ENCODE measurements at regions of chr7 and their contacts with region 1.

Region 1: DNA sequence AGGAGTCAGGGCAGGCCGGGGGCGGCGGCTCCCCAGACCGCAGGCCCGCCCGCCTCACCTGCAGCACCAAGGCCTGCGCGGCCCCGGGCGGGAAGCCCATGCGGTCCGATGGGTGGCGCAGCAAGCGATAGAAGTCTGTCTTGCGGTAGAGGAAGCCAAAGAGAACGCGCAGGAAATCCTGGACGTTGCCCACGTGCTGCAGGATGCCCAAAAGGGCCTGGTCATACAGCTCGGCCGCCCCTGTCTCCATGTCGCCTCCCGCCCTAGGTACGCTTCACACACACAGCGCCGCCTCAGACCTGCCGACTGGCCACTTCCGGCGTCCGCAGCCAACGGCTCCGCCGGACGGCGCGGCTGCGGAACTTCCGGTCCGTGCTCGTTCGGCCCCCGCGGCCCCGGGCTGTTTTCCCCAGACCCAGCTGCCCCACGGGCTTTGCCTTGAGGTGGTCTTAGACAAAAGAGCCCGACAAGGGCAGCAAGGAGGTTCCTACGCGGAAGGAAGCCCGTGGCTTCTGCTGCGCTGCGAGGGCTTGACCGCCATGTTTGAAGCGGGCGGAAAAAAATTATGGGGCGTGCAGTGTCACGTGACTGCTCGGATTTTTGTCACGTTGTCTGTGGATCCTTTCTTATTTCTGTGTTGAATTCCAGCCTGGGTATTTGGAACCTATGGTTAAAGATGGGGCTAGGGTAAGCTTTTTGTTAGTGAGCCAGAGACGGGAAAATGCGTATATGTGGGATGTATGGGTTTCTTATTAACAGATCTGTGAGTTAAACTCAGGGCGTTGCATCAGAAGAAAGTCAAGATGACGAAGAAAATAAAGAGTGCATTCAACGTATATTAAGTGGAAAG is at the start of gene NUDCD3:
- DNase-seq: peak; percentile 71 to 91 (median 78)
- ATAC-seq: peak; percentile 71
- H3K4me3 ChIP-seq: peak within 1 kb of the TSS; percentile 84
- H3K4me3 Mint-ChIP-seq: peak within 1 kb of the TSS; percentile 84
- H3K27ac ChIP-seq: peak within 1 kb of the TSS; percentile 95 to 97
- H3K27ac Mint-ChIP-seq: peak within 1 kb of the TSS; percentile 91
- H3K4me1 ChIP-seq: peaks cover 32% of the 10 kb centered on the region
- H3K4me1 Mint-ChIP-seq: peaks cover 48% of the 10 kb centered on the region
- H3K27me3 ChIP-seq: no peaks in the 10 kb centered on the region
- H3K27me3 Mint-ChIP-seq: peaks cover 3% of the 10 kb centered on the region
- CTCF ChIP-seq: peak; percentile 28
- total RNA-seq, gene NUDCD3: 56.6 to 60.6 TPM

Region 2: DNA sequence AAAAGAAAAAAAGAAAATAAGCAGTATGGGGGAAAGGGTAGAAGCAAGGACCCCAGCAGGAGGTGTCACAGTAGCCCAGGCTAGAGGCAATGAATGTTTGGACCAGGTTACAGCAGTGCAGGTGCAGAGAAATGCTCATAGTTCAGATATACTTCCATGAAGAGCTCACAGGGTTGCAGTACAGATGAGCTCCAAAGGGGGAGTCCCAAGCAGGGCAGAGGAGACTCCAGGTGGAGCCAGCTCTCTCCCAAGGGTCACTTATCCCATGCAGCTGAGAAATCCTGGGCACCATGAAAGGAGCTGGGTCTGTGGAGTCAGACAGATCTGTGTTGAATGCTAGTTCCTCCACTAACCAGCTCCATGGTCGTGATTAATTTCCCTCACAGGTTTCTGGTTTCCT is 1753.6 kb before region 1 on chr7:
- CTCF ChIA-PET with region 1: no interaction called
- POLR2A ChIA-PET with region 1: no interaction called
- intact Hi-C with region 1: no loop called
- DNase-seq: no peak
- ATAC-seq: no peak
- H3K4me3 ChIP-seq: no peak overlapping the region
- H3K4me3 Mint-ChIP-seq: no peak overlapping the region
- H3K27ac ChIP-seq: no peak overlapping the region
- H3K27ac Mint-ChIP-seq: no peak overlapping the region
- H3K4me1 ChIP-seq: no peaks in the 10 kb centered on the region
- H3K4me1 Mint-ChIP-seq: no peaks in the 10 kb centered on the region
- H3K27me3 ChIP-seq: no peaks in the 10 kb centered on the region
- H3K27me3 Mint-ChIP-seq: no peaks in the 10 kb centered on the region
- CTCF ChIP-seq: no peak

Region 3: GRCh38 chr7:43784030-43785001 is 706.3 kb before region 1 on chr7:
- CTCF ChIA-PET with region 1: no interaction called
- POLR2A ChIA-PET with region 1: no interaction called
- intact Hi-C with region 1: no loop called
- DNase-seq: peak in 2 of 14 experiments; percentile 19 to 29
- ATAC-seq: no peak
- H3K4me3 ChIP-seq: no peak overlapping the region
- H3K4me3 Mint-ChIP-seq: no peak overlapping the region
- H3K27ac ChIP-seq: no peak overlapping the region
- H3K27ac Mint-ChIP-seq: no peak overlapping the region
- H3K4me1 ChIP-seq: peaks cover 4% of the 10 kb centered on the region
- H3K4me1 Mint-ChIP-seq: peaks cover 4% of the 10 kb centered on the region
- H3K27me3 ChIP-seq: no peaks in the 10 kb centered on the region
- H3K27me3 Mint-ChIP-seq: no peaks in the 10 kb centered on the region
- CTCF ChIP-seq: no peak

Region 4: DNA sequence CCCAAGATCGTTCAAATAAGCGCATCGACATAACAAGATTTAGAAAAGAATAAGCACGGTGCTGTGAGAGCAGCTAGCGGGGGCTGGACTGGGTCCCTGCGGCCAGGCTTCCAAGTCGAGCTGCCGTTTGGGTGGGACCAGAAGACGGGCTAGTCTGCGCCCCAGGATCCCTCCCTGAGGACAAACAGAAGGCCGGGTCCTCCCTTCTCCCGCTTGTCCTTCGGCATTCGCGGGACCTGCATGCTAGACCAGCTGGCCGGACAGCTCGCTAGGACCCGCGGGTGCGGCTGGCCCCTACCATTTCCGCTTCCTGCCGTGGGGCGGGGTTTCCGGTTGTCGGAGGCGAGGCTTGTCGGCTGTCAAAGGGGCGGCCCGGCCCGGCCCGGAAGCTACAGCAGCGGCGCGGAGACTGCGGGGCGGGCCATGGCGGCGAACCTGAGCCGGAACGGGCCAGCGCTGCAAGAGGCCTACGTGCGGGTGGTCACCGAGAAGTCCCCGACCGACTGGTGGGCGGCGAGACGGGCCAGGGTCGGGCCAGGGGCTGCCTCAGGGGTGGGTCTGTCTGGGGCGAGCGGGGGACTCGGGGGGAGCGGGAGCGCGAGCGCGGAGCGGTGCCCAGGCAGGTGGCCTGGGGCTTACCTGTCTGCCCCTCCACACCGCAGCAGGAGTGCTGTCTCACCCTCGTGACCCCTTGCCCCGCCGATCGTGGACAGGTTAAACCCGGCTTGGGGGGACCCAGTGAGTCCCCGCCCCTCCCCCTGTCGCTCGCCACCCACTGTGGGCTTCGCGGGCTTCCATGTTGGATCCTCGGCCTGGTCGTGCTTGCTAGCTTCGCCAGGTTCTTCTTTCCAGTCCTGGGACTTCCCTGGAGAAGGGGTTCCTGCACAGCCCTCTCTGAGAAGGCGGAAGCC is 446.0 kb before region 1 on chr7 and contains the start of gene DBNL:
- CTCF ChIA-PET with region 1: no interaction called
- POLR2A ChIA-PET with region 1: interaction called, 9 read pairs
- intact Hi-C with region 1: loop called in 1 of 2 experiments (anchors 2 kb)
- DNase-seq: peak; percentile 75 to 92 (median 88)
- ATAC-seq: peak; percentile 54
- H3K4me3 ChIP-seq: peak within 1 kb of the TSS; percentile 99
- H3K4me3 Mint-ChIP-seq: peak within 1 kb of the TSS; percentile 87
- H3K27ac ChIP-seq: peak within 1 kb of the TSS; percentile 89
- H3K27ac Mint-ChIP-seq: peak within 1 kb of the TSS; percentile 91
- H3K4me1 ChIP-seq: peaks cover 62% of the 10 kb centered on the region
- H3K4me1 Mint-ChIP-seq: peaks cover 50% of the 10 kb centered on the region
- H3K27me3 ChIP-seq: no peaks in the 10 kb centered on the region
- H3K27me3 Mint-ChIP-seq: no peaks in the 10 kb centered on the region
- CTCF ChIP-seq: no peak
- total RNA-seq, gene DBNL: 88.5 to 90.6 TPM

Region 5: GRCh38 chr7:44200647-44201461 is 289.7 kb before region 1 on chr7 and contains the start of gene YKT6:
- CTCF ChIA-PET with region 1: interaction called, 5 read pairs
- POLR2A ChIA-PET with region 1: interaction called, 12 read pairs
- intact Hi-C with region 1: loop called in 1 of 2 experiments (anchors 1 kb)
- DNase-seq: peak; percentile 89 to 97 (median 92)
- ATAC-seq: peak; percentile 98
- H3K4me3 ChIP-seq: peak within 1 kb of the TSS; percentile 89
- H3K4me3 Mint-ChIP-seq: peak within 1 kb of the TSS; percentile 83
- H3K27ac ChIP-seq: peak within 1 kb of the TSS in 1 of 2 donors; percentile 56
- H3K27ac Mint-ChIP-seq: peak within 1 kb of the TSS; percentile 62
- H3K4me1 ChIP-seq: peaks cover 15% of the 10 kb centered on the region
- H3K4me1 Mint-ChIP-seq: peaks cover 40% of the 10 kb centered on the region
- H3K27me3 ChIP-seq: peaks cover 0 to 7% of the 10 kb centered on the region in 2 experiments
- H3K27me3 Mint-ChIP-seq: peaks cover 13% of the 10 kb centered on the region
- CTCF ChIP-seq: peak; percentile 65
- total RNA-seq, gene YKT6: 85.0 to 86.4 TPM

Region 6: DNA sequence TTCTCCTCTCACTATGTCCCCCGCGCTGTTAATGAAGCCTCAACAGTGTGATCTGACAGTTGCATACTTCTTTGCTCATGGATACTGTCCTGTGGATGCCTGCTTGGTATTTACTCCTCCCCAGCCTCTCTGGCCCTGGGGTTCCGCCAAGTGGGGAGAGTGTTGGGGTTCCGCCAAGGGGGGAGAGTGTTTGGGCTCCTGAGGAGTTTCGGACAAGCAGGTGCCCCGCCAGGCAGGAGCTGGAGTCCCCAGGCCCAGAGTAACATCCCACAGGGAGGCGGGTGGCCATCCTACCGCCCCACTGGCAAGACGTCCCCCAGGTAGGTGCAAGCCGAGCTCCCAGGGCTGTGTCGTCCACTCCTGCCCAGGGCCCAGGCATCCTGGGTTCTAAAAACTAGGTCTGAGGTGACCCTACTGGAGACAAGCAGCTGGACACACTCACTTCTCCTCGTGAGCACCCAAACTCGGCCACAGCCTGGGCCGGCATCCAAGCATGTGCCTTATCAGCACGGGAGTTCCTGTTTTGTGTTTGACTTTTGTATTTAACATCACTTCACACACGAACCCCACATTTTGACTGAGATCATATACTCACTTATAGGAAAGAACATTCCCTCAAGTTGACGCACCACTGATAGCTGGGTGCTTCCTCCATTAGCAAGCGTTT is 199.4 kb before region 1 on chr7:
- CTCF ChIA-PET with region 1: no interaction called
- POLR2A ChIA-PET with region 1: no interaction called
- intact Hi-C with region 1: no loop called
- DNase-seq: peak in 3 of 14 experiments; percentile 1 to 24 (median 2)
- ATAC-seq: no peak
- H3K4me3 ChIP-seq: no peak overlapping the region
- H3K4me3 Mint-ChIP-seq: no peak overlapping the region
- H3K27ac ChIP-seq: no peak overlapping the region
- H3K27ac Mint-ChIP-seq: no peak overlapping the region
- H3K4me1 ChIP-seq: no peaks in the 10 kb centered on the region
- H3K4me1 Mint-ChIP-seq: no peaks in the 10 kb centered on the region
- H3K27me3 ChIP-seq: peaks cover 15 to 25% of the 10 kb centered on the region in 2 experiments
- H3K27me3 Mint-ChIP-seq: peaks cover 52% of the 10 kb centered on the region
- CTCF ChIP-seq: no peak

Region 7: DNA sequence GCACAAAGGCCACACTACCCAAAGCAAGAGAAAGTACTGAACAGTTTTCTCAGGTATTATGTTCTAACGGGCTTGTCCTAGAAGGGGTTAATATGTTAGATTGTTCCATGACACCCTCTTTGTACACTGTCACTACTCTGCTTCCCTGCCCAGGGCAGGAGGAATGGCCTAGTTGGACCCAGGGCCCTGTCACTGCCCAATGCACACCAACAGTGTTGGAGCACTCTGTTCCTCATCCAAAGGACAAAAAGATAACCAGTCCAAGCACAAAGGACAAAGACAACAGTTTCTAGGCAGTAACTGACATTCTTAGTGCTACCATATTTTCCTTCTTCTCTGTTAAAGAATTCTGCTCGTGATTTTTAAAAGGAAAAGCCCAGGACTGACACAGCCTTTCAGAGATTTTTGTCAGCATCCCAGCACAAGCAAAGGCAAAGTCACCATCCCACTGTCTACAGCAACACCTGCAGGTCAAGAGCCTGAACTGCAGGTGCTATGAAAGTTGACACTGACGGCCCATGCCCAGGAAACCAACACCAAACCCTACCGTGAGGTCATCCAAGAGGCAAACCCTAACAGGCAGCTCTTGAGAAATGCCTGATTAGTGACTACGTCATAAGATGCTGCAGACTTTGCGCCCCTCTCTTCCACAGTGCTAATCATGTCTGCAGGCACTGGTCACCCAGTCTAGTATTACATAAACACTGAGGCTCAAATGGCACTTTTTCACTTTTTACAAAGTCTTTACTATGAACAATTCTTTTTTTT is 13.3 kb before region 1 on chr7:
- CTCF ChIA-PET with region 1: interaction called, 4 read pairs
- POLR2A ChIA-PET with region 1: interaction called, 15 read pairs
- intact Hi-C with region 1: no loop called
- DNase-seq: peak; percentile 33 to 83 (median 50)
- ATAC-seq: peak; percentile 98
- H3K4me3 ChIP-seq: no peak overlapping the region
- H3K4me3 Mint-ChIP-seq: no peak overlapping the region
- H3K27ac ChIP-seq: no peak overlapping the region
- H3K27ac Mint-ChIP-seq: peak overlapping the region; percentile 35
- H3K4me1 ChIP-seq: peaks cover 8% of the 10 kb centered on the region
- H3K4me1 Mint-ChIP-seq: peaks cover 74% of the 10 kb centered on the region
- H3K27me3 ChIP-seq: no peaks in the 10 kb centered on the region
- H3K27me3 Mint-ChIP-seq: no peaks in the 10 kb centered on the region
- CTCF ChIP-seq: peak; percentile 92

Region 8: GRCh38 chr7:44581879-44582603 is 91.5 kb after region 1 on chr7 and contains the start of gene TMED4:
- CTCF ChIA-PET with region 1: no interaction called
- POLR2A ChIA-PET with region 1: interaction called, 31 read pairs
- intact Hi-C with region 1: no loop called
- DNase-seq: peak; percentile 100
- ATAC-seq: peak; percentile 86
- H3K4me3 ChIP-seq: peak within 1 kb of the TSS; percentile 87
- H3K4me3 Mint-ChIP-seq: peak within 1 kb of the TSS; percentile 95
- H3K27ac ChIP-seq: peak within 1 kb of the TSS; percentile 96
- H3K27ac Mint-ChIP-seq: peak within 1 kb of the TSS; percentile 97
- H3K4me1 ChIP-seq: peaks cover 32% of the 10 kb centered on the region
- H3K4me1 Mint-ChIP-seq: peaks cover 39% of the 10 kb centered on the region
- H3K27me3 ChIP-seq: no peaks in the 10 kb centered on the region
- H3K27me3 Mint-ChIP-seq: no peaks in the 10 kb centered on the region
- CTCF ChIP-seq: no peak
- total RNA-seq, gene TMED4: 134 to 138 TPM

Region 9: DNA sequence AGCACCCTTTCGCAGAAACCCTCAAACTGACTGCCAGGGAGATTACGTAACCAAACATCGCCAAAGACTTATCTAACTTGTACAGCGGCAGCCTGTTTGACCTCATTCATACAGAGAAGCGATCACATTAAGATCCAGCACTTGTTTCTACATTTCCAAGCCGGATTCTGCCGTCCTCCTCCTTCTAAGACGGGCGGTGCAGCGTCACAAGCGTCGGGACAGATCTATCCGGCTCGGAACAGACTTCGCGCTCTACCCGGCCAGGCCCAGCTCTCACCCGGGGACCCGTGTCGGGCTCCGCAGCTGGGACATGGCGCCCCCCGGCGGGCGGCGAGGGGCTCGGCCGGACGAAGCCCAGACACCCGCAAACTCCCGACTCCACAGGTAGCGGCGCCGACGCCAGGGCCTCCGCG is 356.9 kb after region 1 on chr7:
- CTCF ChIA-PET with region 1: no interaction called
- POLR2A ChIA-PET with region 1: interaction called, 33 read pairs
- intact Hi-C with region 1: loop called in 1 of 2 experiments (anchors 10 kb)
- DNase-seq: peak; percentile 75 to 94 (median 84)
- ATAC-seq: peak; percentile 54
- H3K4me3 ChIP-seq: peak overlapping the region; percentile 71
- H3K4me3 Mint-ChIP-seq: peak overlapping the region; percentile 87
- H3K27ac ChIP-seq: peak overlapping the region; percentile 91 to 99
- H3K27ac Mint-ChIP-seq: peak overlapping the region; percentile 95
- H3K4me1 ChIP-seq: peaks cover 17% of the 10 kb centered on the region
- H3K4me1 Mint-ChIP-seq: peaks cover 43% of the 10 kb centered on the region
- H3K27me3 ChIP-seq: no peaks in the 10 kb centered on the region
- H3K27me3 Mint-ChIP-seq: peaks cover 4% of the 10 kb centered on the region
- CTCF ChIP-seq: peak; percentile 68